ENCODE measurements at regions of chr6 and their contacts with region 1.

Region 1: DNA sequence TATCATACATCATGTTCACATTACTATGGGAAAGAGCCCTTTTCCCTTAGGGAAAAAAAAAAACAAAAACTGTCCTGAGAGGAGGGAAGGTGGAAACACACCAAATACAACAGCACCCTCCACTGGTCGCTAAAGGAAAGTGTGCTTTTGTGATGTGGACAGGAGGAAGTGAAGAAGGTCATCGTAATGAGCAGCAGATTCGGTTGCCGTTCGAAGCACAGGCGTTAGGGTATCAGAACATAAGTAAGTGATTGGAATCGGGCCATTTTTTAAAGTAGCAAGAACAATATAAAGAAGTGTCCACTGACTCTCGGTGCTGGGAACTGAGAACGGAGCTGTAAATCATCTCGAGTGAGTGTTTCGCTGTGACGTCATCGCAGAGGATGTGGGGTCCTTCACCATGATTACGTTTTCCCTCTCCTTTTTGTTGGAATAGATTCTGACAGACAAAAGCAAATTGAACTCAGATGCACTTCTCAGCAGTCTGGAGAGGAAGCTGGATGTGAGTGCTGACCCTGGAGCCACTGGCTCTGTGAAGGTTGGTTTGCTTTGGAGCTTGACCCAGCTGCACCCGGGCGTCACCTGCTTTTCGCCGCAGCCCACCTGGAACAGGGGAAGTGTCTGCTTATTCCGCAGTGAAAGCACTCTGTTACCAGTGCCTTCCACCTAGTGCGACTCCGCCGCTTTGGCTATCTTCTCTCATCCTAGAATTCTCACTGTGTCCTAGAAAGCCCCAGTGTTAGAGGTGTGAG is 203.6 kb upstream of the GMDS start:
- DNase-seq: peak; percentile 48
- H3K4me3 Mint-ChIP-seq: peak overlapping the region; percentile 28
- H3K27ac Mint-ChIP-seq: no peak overlapping the region
- H3K4me1 Mint-ChIP-seq: peaks cover 5% of the 10 kb centered on the region
- H3K27me3 Mint-ChIP-seq: no peaks in the 10 kb centered on the region

Region 2: GRCh38 chr6:2209226-2209809 is 239.7 kb before region 1 on chr6:
- CTCF ChIA-PET with region 1: no interaction called
- intact Hi-C with region 1: loop called (anchors 1 kb)
- DNase-seq: peak; percentile 57
- H3K4me3 Mint-ChIP-seq: no peak overlapping the region
- H3K27ac Mint-ChIP-seq: no peak overlapping the region
- H3K4me1 Mint-ChIP-seq: no peaks in the 10 kb centered on the region
- H3K27me3 Mint-ChIP-seq: no peaks in the 10 kb centered on the region

Region 3: DNA sequence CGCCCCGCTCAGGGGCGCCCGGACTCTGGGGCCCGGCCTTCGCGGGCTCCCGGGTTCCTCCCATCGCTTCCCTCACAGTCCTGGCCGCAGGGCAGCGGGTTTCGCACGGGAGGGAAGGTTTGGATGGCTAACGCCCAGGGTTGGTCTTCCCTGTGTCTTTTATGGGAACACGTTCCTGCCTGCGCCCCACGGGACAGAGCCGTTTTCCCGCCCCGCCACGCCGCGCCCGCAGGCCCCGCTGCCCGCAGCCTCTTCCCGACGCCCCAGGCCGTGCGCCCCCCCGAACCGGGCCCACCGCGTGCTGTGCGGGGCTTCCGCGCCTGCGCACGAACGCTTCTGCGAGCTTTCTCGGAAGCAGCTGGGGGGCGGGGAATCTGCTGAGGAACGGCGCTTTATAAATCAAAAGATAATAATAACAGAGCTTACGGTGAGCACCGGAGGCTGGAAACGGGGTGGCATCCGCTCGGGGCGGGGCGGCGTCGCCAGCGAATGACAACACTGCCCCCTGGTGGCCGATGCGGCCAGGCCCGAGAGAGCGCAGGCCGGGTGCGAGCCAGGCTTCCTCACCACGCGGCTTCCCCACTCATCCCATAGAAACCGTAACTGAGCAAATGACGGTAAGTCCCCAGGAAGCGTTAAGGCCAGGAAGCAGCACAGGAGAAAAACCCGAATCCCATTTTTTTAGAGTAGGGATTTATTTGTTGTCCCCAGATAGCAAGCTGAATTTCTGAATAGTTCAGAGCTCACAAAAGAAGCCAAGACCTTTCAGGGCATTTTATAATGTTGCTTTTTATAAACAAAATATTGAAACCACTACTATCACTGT is 185.4 kb after region 1 on chr6:
- CTCF ChIA-PET with region 1: interaction called, 3 read pairs
- intact Hi-C with region 1: loop called (anchors 10 kb)
- DNase-seq: peak; percentile 88
- H3K4me3 Mint-ChIP-seq: peak overlapping the region; percentile 58
- H3K27ac Mint-ChIP-seq: no peak overlapping the region
- H3K4me1 Mint-ChIP-seq: peaks cover 3% of the 10 kb centered on the region
- H3K27me3 Mint-ChIP-seq: peaks cover 11% of the 10 kb centered on the region